Activated CD8-positive, alpha-beta T cell treated with anti-CD3 and anti-CD28 coated beads for 36 hours (primary cell): ENCODE measurements at regions of chr3 and their contacts with region 1.

Region 1: GRCh38 chr3:45870099-45870498 is 16.2 kb upstream of the CCR9 start:
- DNase-seq: peak; percentile 73
- ATAC-seq: peak; percentile 89
- H3K4me3 Mint-ChIP-seq: no peak overlapping the region
- H3K27ac Mint-ChIP-seq: no peak overlapping the region
- H3K4me1 Mint-ChIP-seq: peaks cover 42% of the 10 kb centered on the region
- H3K27me3 Mint-ChIP-seq: peaks cover 65% of the 10 kb centered on the region
- CTCF ChIP-seq: no peak

Region 2: GRCh38 chr3:45915518-45916231 is 45.6 kb after region 1 on chr3:
- CTCF ChIA-PET with region 1: interaction called, 3 read pairs
- POLR2A ChIA-PET with region 1: no interaction called
- intact Hi-C with region 1: loop called (anchors 5 kb)
- DNase-seq: peak; percentile 91
- ATAC-seq: peak; percentile 93
- H3K4me3 Mint-ChIP-seq: peak overlapping the region; percentile 51
- H3K27ac Mint-ChIP-seq: peak overlapping the region; percentile 50
- H3K4me1 Mint-ChIP-seq: peaks cover 37% of the 10 kb centered on the region
- H3K27me3 Mint-ChIP-seq: peaks cover 11% of the 10 kb centered on the region
- CTCF ChIP-seq: no peak

Region 3: GRCh38 chr3:46017720-46018119 is 147.6 kb after region 1 on chr3:
- CTCF ChIA-PET with region 1: no interaction called
- POLR2A ChIA-PET with region 1: no interaction called
- intact Hi-C with region 1: no loop called
- DNase-seq: no peak
- ATAC-seq: no peak
- H3K4me3 Mint-ChIP-seq: no peak overlapping the region
- H3K27ac Mint-ChIP-seq: no peak overlapping the region
- H3K4me1 Mint-ChIP-seq: peaks cover 33% of the 10 kb centered on the region
- H3K27me3 Mint-ChIP-seq: peaks cover 6% of the 10 kb centered on the region
- CTCF ChIP-seq: no peak

Region 4: GRCh38 chr3:46297658-46298463 is 427.8 kb after region 1 on chr3:
- CTCF ChIA-PET with region 1: no interaction called
- POLR2A ChIA-PET with region 1: no interaction called
- intact Hi-C with region 1: loop called (anchors 10 kb)
- DNase-seq: no peak
- ATAC-seq: no peak
- H3K4me3 Mint-ChIP-seq: no peak overlapping the region
- H3K27ac Mint-ChIP-seq: peak overlapping the region; percentile 87
- H3K4me1 Mint-ChIP-seq: peaks cover 87% of the 10 kb centered on the region
- H3K27me3 Mint-ChIP-seq: peaks cover 4% of the 10 kb centered on the region
- CTCF ChIP-seq: no peak